ENCODE measurements at regions of chr17 and their contacts with region 1.

Region 1: GRCh38 chr17:35189291-35189690 is 4.9 kb downstream of the SLC35G3 start:
- DNase-seq: no peak
- ATAC-seq: no peak
- H3K4me3 ChIP-seq: peak overlapping the region; percentile 3 to 33
- H3K4me3 Mint-ChIP-seq: peak overlapping the region; percentile 79
- H3K27ac ChIP-seq: peak overlapping the region; percentile 7 to 52
- H3K27ac Mint-ChIP-seq: peak overlapping the region; percentile 92
- H3K4me1 ChIP-seq: peaks cover 66% of the 10 kb centered on the region
- H3K4me1 Mint-ChIP-seq: peaks cover 79% of the 10 kb centered on the region
- H3K27me3 ChIP-seq: no peaks in the 10 kb centered on the region
- H3K27me3 Mint-ChIP-seq: no peaks in the 10 kb centered on the region
- CTCF ChIP-seq: no peak

Region 2: DNA sequence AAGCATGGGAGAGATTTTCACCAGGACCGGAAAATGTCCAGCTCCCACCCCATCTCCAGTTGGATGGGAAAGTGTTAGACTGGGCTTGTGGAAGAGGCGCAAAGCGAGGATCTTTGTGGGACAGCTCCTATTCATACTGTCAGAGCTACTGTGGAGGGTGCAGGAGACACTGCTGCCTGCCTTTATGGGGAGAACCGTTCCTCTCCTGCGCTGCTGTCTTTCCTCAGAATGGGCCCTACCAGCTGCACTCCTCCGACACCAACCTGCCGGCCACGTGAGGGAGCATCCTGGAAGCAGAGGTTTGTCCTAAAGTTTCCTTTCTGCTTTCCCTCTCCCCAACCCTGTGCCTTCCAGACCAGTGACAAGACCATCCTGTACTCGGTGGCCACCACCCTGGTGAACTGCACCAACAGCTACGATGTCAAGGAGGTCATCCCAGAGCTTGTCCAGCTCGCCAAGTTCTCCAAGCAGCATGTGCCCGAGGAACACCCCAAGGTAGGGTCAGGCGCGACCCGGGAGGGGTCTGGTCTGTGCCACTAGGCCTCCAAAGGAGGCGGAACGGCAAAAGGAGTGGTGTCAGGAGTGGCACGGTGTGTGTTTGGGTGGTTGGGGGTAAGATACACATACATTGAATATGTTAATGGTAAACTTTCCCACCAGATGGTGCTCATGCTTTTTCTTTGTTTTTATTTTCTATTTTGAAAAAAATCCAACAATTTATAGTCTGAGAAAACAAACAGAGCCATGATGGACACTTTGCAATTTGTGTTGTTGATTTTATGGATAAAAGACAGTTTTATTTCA is 18.1 kb before region 1 on chr17:
- CTCF ChIA-PET with region 1: interaction called, 4 read pairs
- POLR2A ChIA-PET with region 1: interaction called, 3 read pairs
- intact Hi-C with region 1: loop called in 1 of 2 experiments (anchors 2 kb)
- DNase-seq: peak in 5 of 9 experiments; percentile 31 to 70 (median 62)
- ATAC-seq: peak; percentile 79
- H3K4me3 ChIP-seq: peak overlapping the region; percentile 10 to 31
- H3K4me3 Mint-ChIP-seq: peak overlapping the region; percentile 57
- H3K27ac ChIP-seq: peak overlapping the region in 1 of 2 experiments; percentile 51
- H3K27ac Mint-ChIP-seq: peak overlapping the region; percentile 90
- H3K4me1 ChIP-seq: peaks cover 37% of the 10 kb centered on the region
- H3K4me1 Mint-ChIP-seq: peaks cover 46% of the 10 kb centered on the region
- H3K27me3 ChIP-seq: no peaks in the 10 kb centered on the region
- H3K27me3 Mint-ChIP-seq: no peaks in the 10 kb centered on the region
- CTCF ChIP-seq: peak; percentile 69